Dendritic cell treated with granulocyte-macrophage colony-stimulating factor and Interleukin-4, amounts not matched to agents 40 ng/mL and 50 ng/mL, for 4 days (primary cell): ENCODE measurements at regions of chr12 and their contacts with region 1.

Region 1: DNA sequence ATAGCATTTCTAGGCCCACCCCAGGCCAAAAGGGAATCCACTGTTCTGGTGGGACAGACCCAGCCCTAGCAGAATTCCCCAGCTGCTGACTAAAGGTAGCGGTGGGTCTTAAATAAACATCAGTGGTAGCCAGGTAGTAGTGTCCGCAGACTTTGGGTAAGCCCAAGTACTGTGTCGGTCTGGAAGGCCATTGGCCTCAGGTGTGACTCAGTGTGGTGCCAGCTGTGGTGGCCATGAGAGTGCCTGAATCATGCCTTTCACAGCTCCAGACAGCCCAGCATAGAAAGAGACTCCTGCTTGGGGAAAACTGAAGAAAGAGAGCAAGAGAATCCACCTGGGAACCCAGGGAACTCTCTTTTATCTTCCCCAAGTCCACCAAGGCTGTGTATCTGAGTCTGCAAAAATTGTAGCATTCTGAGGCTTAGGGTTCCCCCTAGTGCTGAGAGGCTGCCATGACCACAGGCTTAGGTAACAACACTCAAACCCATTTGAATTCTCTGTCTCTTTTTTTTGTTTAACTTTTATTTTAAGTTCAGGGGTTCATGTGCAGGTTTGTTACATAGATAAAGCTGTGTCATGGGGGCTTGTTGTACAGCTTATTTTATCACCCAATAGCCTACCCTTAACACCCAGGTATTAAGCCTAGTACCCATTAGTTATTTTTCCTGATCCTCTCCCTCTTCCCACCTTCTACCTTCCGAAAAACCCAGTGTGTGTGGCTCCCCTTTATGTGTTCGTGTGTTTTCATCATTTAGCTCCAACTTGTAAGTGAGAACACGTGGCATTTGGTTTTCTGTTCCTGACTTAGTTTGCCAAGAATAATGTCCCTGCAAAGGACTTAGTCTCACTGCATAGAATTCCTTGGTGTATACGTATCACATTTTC is 16.7 kb upstream of the CD163L1 start:
- H3K4me3 Mint-ChIP-seq: no peak overlapping the region
- H3K27ac Mint-ChIP-seq: no peak overlapping the region
- H3K4me1 Mint-ChIP-seq: peaks cover 14% of the 10 kb centered on the region
- H3K27me3 Mint-ChIP-seq: peaks cover 2% of the 10 kb centered on the region

Region 2: GRCh38 chr12:7219599-7220243 is 240.9 kb before region 1 on chr12:
- intact Hi-C with region 1: loop called (anchors 1 kb)
- H3K4me3 Mint-ChIP-seq: no peak overlapping the region
- H3K27ac Mint-ChIP-seq: no peak overlapping the region
- H3K4me1 Mint-ChIP-seq: no peaks in the 10 kb centered on the region
- H3K27me3 Mint-ChIP-seq: peaks cover 4% of the 10 kb centered on the region

Region 3: GRCh38 chr12:7374423-7375144 is 86.0 kb before region 1 on chr12:
- intact Hi-C with region 1: loop called (anchors 1 kb)
- H3K4me3 Mint-ChIP-seq: no peak overlapping the region
- H3K27ac Mint-ChIP-seq: no peak overlapping the region
- H3K4me1 Mint-ChIP-seq: peaks cover 6% of the 10 kb centered on the region
- H3K27me3 Mint-ChIP-seq: peaks cover 12% of the 10 kb centered on the region